ENCODE measurements at regions of chr2 and their contacts with region 1.

Region 1: DNA sequence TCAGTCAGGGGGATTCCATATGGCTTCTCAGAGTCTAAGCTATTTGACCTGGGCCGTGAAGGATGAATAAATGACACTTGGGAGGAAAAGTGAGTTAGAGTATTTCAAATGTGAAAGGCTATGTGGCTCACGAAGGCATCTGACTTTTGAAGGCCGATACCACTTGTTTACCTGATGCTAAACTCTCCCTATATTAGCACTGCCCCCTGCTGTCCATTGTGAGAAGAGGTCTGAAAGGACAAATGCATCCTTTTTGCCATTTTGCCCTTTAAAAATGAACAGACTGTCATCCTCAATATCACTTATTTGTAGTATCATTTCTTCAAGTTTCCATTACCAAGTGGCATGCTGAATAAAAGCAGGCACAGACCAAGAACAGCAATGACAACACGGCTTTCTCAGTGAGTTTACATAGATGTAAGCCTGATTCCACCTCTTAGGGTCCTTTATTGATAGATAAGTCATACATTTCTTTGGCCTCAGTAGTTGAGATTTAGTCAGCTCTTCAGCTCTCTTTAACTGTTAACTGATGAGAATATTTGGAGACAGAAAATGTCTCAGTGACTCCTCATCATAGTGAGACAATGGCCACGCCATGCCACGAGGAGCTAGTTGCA is 40.1 kb downstream of the DOCK10 start:
- DNase-seq: peak; percentile 61
- H3K4me3 Mint-ChIP-seq: no peak overlapping the region
- H3K27ac Mint-ChIP-seq: no peak overlapping the region
- H3K4me1 Mint-ChIP-seq: peaks cover 38% of the 10 kb centered on the region
- H3K27me3 Mint-ChIP-seq: no peaks in the 10 kb centered on the region
- CTCF ChIP-seq: peak; percentile 77

Region 2: DNA sequence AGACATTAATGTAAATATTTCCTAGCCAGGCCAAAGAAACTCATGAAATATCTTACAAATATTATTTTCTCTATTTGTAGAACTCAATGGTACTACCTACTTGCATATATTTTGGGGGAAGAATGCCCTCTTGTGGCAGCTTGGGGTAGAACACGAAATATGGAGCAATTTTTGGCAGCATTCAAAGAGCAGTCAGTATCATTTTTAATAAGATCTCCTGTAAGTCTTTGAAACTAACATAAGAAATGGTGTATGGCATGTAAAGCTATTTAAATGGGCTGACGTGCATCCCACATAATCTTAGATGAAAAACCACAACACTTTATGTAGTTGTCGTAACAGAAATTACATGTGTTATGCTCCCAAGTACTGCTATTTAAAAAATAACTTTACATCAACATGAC is 223.7 kb before region 1 on chr2:
- CTCF ChIA-PET with region 1: no interaction called
- intact Hi-C with region 1: loop called (anchors 1 kb)
- DNase-seq: peak; percentile 67
- H3K4me3 Mint-ChIP-seq: no peak overlapping the region
- H3K27ac Mint-ChIP-seq: no peak overlapping the region
- H3K4me1 Mint-ChIP-seq: peaks cover 23% of the 10 kb centered on the region
- H3K27me3 Mint-ChIP-seq: no peaks in the 10 kb centered on the region
- CTCF ChIP-seq: peak; percentile 48

Region 3: GRCh38 chr2:224885836-224886547 is 116.2 kb before region 1 on chr2:
- CTCF ChIA-PET with region 1: no interaction called
- intact Hi-C with region 1: loop called (anchors 10 kb)
- DNase-seq: no peak
- H3K4me3 Mint-ChIP-seq: no peak overlapping the region
- H3K27ac Mint-ChIP-seq: no peak overlapping the region
- H3K4me1 Mint-ChIP-seq: peaks cover 46% of the 10 kb centered on the region
- H3K27me3 Mint-ChIP-seq: no peaks in the 10 kb centered on the region
- CTCF ChIP-seq: no peak

Region 4: DNA sequence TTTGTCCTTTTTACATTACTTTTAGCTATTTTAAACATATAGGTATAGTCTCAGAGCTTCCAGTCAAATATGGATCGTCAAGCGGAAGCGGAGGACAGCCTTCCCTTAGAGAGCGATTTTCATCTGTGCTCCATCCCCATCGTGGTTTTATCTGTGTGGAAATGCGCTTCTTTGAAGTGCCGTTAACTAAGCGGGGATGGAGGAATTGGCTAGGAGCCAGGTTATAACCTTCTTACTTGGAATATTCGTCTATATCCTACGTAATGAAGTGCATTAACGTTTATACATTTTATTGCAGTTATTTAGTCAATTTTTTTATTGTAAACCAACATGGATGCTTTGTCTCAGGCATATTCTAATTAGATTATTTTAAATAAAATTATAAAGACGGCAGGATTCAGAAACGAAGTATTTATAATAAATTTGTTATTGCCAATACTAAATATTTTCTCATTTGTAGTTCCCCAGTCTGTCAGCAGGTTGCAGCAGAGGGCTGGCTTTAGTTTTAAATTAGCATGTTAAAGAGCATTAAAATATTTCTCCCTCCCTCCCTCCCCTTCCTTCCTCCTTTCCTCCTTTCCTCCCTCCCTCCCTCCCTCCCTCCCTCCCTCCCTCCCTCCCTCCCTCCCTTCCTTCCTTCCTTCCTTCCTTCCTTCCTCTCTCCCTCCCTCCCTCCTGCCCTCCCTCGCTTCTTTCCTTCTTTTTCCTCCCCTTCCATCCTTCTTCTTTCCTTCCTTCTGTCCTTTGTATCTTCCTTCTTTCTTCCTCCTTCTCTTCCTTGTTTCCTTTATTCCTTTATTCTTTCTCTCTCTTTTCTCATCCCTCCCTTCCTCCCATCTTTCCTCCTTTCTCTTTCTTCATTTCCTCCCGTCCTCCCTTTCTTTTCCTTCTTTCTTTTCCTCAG is 120.7 kb after region 1 on chr2:
- CTCF ChIA-PET with region 1: no interaction called
- intact Hi-C with region 1: loop called (anchors 5 kb)
- DNase-seq: peak; percentile 38
- H3K4me3 Mint-ChIP-seq: no peak overlapping the region
- H3K27ac Mint-ChIP-seq: peak overlapping the region; percentile 3
- H3K4me1 Mint-ChIP-seq: no peaks in the 10 kb centered on the region
- H3K27me3 Mint-ChIP-seq: peaks cover 6% of the 10 kb centered on the region
- CTCF ChIP-seq: peak; percentile 39